Heart left ventricle (tissue), 16 donors: ENCODE measurements at regions of chr5 and their contacts with region 1.

Region 1: DNA sequence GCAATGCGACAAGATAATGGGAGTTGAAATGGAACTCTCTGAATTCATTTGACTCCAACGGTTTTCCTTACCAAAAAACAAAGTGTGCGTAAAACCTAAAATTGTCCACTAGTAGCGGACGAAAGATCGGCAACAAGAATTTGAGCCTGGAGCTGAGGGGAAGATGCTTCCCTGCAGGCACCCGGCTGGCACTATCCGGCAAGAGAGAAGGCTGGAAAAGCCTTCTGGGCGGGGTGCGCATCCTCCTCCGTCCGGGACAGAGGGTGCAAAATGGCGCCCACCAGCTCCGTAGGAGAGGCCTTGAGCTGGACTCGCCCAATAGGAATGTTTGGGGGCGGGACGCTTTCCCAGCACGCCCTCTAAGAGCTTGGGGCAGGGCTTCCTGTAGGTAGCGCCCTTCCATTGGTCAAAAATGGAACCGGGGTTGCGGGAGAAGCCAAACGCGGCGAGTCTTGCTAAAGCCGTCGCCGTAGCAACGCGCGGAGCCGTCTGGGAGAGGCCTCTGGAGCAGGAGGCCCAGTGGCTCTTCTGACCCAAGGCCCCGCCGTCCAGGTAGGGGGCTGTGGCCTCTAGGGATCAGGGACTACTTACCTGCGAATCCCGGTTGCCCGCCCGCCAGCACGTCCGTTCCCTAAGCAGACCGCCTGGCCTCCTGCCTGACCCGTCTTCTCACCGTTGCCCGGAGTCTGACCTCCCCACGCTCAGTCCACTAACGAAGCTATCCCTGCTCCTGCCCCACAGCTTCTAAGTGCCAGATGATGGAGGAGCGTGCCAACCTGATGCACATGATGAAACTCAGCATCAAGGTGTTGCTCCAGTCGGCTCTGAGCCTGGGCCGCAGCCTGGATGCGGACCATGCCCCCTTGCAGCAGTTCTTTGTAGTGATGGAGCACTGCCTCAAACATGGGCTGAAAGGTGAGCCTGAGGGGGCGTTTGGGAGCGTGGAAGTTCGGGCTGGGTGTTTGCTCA is 9.2 kb downstream of the RUFY1 start:
- DNase-seq: peak; percentile 97 to 99 (median 99)
- ATAC-seq: peak; percentile 99 to 100 (median 100)
- H3K4me3 ChIP-seq: peak overlapping the region; percentile 16 to 72 (median 61)
- H3K27ac ChIP-seq: peak overlapping the region; percentile 69 to 91 (median 82)
- H3K4me1 ChIP-seq: peaks cover 0 to 21% (median 13%) of the 10 kb centered on the region in 12 donors
- H3K27me3 ChIP-seq: no peaks in the 10 kb centered on the region
- CTCF ChIP-seq: peak in 2 of 12 donors; percentile 25 to 38
- POLR2A ChIP-seq: peak; percentile 78 to 96

Region 2: GRCh38 chr5:179361037-179361603 is 198.4 kb before region 1 on chr5:
- intact Hi-C with region 1: no loop called
- DNase-seq: no peak
- ATAC-seq: no peak
- H3K4me3 ChIP-seq: no peak overlapping the region
- H3K27ac ChIP-seq: no peak overlapping the region
- H3K4me1 ChIP-seq: peaks cover 0 to 16% (median 0%) of the 10 kb centered on the region in 12 donors
- H3K27me3 ChIP-seq: peaks cover 0 to 3% (median 0%) of the 10 kb centered on the region in 9 donors
- CTCF ChIP-seq: no peak
- POLR2A ChIP-seq: no peak

Region 3: GRCh38 chr5:179613460-179614071 is 54.0 kb after region 1 on chr5:
- intact Hi-C with region 1: loop called in 1 of 10 experiments (anchors 10 kb)
- DNase-seq: no peak
- ATAC-seq: no peak
- H3K4me3 ChIP-seq: no peak overlapping the region
- H3K27ac ChIP-seq: no peak overlapping the region
- H3K4me1 ChIP-seq: peaks cover 0 to 53% (median 38%) of the 10 kb centered on the region in 12 donors
- H3K27me3 ChIP-seq: no peaks in the 10 kb centered on the region
- CTCF ChIP-seq: no peak
- POLR2A ChIP-seq: no peak

Region 4: DNA sequence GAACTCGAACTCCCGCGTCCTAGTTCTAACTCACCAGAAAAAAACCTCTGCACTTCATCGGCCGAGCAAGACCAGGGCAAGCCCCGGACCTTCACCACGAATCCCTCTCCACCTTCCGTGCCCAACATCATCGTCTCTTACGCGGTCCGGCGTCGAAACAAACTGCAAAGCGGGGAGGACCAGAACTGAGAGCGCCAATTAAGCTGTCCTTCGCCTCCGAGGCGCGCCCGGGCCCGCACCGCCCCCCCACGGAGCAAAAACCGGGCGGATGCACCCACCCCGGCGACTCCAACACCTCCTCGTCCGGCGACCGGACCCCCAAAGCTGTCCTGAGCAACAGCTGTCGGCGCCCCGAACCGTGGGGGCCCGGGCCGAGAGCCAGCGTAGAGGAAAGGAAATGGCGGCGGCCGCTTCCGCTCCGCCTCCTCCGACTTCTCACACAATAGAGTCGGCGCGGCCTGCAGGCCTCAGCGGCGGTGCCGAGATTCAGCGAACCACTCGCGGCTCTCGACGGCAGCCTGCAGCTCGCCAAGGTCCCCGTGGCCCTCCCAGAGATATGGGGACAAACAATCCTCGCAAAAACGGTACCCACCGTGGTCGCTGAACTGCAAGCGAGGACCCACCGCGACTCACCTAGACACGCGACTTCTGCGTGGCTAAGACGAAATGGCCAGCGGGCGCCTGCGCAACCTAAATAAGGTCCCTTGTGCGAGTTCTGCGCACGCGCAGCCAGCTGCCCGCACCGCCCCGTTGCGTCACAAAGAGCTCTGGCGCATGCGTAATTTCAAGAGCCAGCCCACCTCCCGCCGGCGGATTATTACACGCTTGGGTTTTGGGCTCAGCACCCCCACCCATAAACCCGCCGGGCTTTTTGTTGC is 63.7 kb after region 1 on chr5 and contains the start of gene HNRNPH1:
- intact Hi-C with region 1: loop called in 4 of 10 experiments (anchors 5 to 10 kb)
- DNase-seq: peak; percentile 98 to 99 (median 98)
- ATAC-seq: peak; percentile 87 to 93 (median 90)
- H3K4me3 ChIP-seq: peak within 1 kb of the TSS; percentile 66 to 100 (median 96)
- H3K27ac ChIP-seq: peak within 1 kb of the TSS; percentile 97 to 100 (median 100)
- H3K4me1 ChIP-seq: peaks cover 17 to 54% (median 46%) of the 10 kb centered on the region in 12 donors
- H3K27me3 ChIP-seq: no peaks in the 10 kb centered on the region
- CTCF ChIP-seq: peak in 4 of 12 donors; percentile 1 to 11 (median 4)
- POLR2A ChIP-seq: peak; percentile 78 to 99
- total RNA-seq, gene HNRNPH1: 106 to 252 (median 178) TPM